A673 (cell line): ENCODE measurements at regions of chr7 and their contacts with region 1.

Region 1: DNA sequence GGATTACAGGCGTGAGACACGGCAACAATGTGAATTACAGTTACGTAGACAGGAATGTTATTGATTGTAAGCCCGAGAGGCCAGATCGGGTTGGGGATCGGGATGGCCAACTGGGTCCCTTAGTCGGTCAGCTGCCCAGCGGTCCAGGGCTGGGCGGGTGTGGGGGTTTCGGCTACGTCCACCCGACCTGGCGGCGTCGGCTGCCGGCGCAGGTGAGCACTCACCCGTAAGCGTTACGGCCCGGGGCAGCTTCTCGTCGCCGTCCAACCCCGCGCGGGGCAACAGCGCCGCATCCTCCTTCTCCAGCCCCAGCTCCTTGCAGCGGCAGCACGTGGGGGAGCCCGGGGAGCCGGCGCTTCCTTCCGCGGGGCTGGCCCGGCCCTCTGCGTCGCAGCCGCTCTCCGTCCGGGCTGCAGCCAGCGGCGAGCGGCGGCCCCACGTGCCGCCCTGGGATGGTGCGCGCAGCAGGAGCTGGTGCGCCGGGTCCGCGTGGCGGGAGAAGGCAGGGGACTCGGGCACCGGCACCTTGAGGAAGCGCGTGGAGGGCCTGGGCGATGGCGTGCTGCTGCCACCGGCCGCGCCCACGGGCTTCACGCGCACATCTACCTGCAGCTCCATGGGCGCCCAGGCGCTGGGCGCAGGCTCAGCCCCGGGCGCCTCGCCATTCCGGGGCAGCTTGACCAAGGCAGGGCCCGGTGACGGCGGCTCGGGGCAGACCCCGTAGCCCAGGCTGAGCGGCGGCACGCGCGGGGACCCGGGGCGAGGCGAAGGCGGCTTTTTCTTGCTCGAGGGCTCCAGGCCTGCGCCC is 607 bp downstream of the KLRG2 start:
- DNase-seq: peak; percentile 16
- H3K4me3 ChIP-seq: peak overlapping the region; percentile 24
- H3K27ac ChIP-seq: no peak overlapping the region
- H3K4me1 ChIP-seq: peaks cover 13% of the 10 kb centered on the region
- H3K27me3 ChIP-seq: peaks cover 59% of the 10 kb centered on the region
- CTCF ChIP-seq: no peak

Region 2: DNA sequence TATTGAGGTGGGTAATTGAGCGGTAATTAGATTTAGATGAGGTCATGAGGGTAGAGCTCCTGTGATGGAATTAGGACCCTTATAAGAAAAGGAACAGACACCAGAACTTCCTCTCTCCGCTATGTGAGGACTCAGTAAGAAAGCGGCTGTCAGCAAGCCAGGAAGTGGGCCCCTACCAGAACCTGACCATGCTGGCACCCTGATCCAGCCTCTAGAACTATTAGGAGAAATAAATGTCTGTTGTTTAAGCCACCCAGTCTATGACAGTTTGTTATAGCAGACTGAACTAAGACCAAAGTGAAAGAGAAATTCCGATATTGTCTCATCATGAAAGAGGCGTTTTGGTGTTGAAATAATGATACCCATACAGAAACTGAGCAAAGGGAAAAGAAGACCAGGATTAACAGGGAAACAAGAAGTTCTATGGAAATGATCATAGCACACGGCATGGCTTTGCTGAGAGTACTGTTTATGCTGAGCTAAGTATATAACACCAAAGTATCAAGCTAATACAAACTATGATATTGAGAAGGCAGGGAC is 49.8 kb after region 1 on chr7:
- CTCF ChIA-PET with region 1: interaction called, 13 read pairs
- POLR2A ChIA-PET with region 1: no interaction called
- intact Hi-C with region 1: no loop called
- DNase-seq: no peak
- H3K4me3 ChIP-seq: no peak overlapping the region
- H3K27ac ChIP-seq: no peak overlapping the region
- H3K4me1 ChIP-seq: no peaks in the 10 kb centered on the region
- H3K27me3 ChIP-seq: peaks cover 18% of the 10 kb centered on the region
- CTCF ChIP-seq: no peak

Region 3: GRCh38 chr7:139618482-139619366 is 135.9 kb after region 1 on chr7:
- CTCF ChIA-PET with region 1: no interaction called
- POLR2A ChIA-PET with region 1: no interaction called
- intact Hi-C with region 1: no loop called
- DNase-seq: peak; percentile 62
- H3K4me3 ChIP-seq: no peak overlapping the region
- H3K27ac ChIP-seq: no peak overlapping the region
- H3K4me1 ChIP-seq: peaks cover 6% of the 10 kb centered on the region
- H3K27me3 ChIP-seq: no peaks in the 10 kb centered on the region
- CTCF ChIP-seq: peak; percentile 54